Activated CD4-positive, alpha-beta T cell treated with anti-CD3 and anti-CD28 coated beads, Interleukin-2, amount 10 ng/mL, durations not matched to agents 24 days and 14 days (primary cell): ENCODE measurements at regions of chr4 and their contacts with region 1.

Region 1: GRCh38 chr4:6709230-6710114 is at the start of gene MRFAP1L1:
- DNase-seq: peak; percentile 99
- H3K4me3 Mint-ChIP-seq: peak within 1 kb of the TSS; percentile 95
- H3K27ac Mint-ChIP-seq: peak within 1 kb of the TSS; percentile 97
- H3K4me1 Mint-ChIP-seq: peaks cover 51% of the 10 kb centered on the region
- H3K27me3 Mint-ChIP-seq: no peaks in the 10 kb centered on the region
- total RNA-seq, gene MRFAP1L1: 51.4 TPM in 2 replicates

Region 2: GRCh38 chr4:6574747-6575502 is 134.5 kb before region 1 on chr4 and contains the start of gene MAN2B2:
- intact Hi-C with region 1: loop called (anchors 1 kb)
- DNase-seq: peak; percentile 96
- H3K4me3 Mint-ChIP-seq: peak within 1 kb of the TSS; percentile 89
- H3K27ac Mint-ChIP-seq: peak within 1 kb of the TSS; percentile 83
- H3K4me1 Mint-ChIP-seq: peaks cover 9% of the 10 kb centered on the region
- H3K27me3 Mint-ChIP-seq: peaks cover 8% of the 10 kb centered on the region
- total RNA-seq, gene MAN2B2: 12.7 and 14.9 TPM in 2 replicates

Region 3: DNA sequence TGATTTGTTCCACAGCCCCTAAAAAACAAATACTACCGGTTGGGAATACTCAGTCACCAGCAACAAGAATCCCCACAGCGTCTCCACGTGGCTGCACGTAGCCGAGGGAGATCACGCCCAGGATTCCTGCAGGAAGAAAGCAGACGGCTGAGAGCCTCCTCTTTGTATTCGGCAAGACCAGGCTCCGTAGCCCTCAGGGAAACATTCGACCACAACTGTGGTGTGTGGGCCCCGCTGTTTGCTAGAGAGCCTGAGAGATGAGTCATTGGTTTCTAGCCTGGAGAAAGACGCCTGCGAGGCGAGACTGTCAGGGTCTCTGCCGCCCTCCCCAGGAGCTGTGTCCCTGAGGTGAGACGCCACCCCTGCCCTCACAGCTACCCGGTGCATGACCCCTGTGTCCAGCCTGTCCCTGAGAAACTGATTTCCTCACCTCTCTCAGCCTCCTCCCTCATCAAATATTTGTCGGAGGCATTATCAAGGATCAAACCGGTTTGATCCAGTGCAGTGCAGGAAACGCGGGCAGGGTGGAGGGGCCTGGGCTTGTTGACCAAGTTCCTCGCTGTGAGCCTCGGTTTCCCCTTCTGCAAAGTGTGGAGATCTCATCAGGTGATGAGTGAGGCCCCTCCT is 20.5 kb before region 1 on chr4:
- intact Hi-C with region 1: loop called (anchors 2 kb)
- DNase-seq: peak; percentile 92
- H3K4me3 Mint-ChIP-seq: peak overlapping the region; percentile 87
- H3K27ac Mint-ChIP-seq: peak overlapping the region; percentile 92
- H3K4me1 Mint-ChIP-seq: peaks cover 65% of the 10 kb centered on the region
- H3K27me3 Mint-ChIP-seq: no peaks in the 10 kb centered on the region

Region 4: GRCh38 chr4:6695660-6696630 is 13.5 kb before region 1 on chr4:
- intact Hi-C with region 1: loop called (anchors 1 kb)
- DNase-seq: peak; percentile 89
- H3K4me3 Mint-ChIP-seq: peak overlapping the region; percentile 72
- H3K27ac Mint-ChIP-seq: peak overlapping the region; percentile 97
- H3K4me1 Mint-ChIP-seq: peaks cover 70% of the 10 kb centered on the region
- H3K27me3 Mint-ChIP-seq: no peaks in the 10 kb centered on the region

Region 5: DNA sequence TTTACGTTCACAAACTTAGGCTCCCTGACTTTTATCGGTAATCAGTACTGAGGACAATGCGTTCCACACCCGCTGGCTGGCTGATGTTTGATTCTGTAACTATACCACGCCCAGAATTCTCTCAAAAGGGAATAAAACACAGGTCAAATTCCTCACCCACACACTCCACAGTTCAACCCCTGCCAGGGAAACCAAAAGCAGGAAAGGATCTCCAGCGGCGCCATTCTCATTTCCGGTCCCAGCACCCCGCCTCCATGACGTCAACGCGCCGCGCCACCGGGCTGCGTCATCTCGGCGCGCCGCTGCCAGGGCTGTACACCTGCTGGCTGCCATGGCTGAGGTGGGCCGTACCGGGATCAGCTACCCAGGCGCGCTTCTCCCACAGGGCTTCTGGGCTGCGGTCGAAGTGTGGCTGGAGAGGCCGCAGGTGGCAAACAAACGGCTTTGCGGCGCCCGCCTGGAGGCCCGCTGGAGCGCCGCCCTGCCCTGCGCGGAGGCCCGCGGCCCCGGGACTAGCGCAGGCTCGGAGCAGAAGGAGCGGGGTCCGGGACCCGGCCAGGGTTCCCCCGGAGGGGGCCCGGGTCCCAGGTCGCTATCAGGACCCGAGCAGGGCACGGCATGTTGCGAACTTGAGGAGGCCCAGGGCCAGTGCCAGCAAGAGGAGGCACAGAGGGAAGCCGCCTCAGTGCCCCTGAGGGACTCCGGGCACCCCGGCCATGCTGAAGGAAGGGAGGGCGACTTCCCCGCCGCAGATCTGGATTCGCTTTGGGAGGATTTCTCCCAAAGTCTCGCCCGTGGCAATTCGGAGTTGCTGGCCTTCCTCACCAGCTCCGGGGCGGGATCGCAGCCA is 1731.2 kb after region 1 on chr4 and contains the starts of genes ACOX3 and TRMT44:
- intact Hi-C with region 1: loop called (anchors 10 kb)
- DNase-seq: peak; percentile 100
- H3K4me3 Mint-ChIP-seq: peak within 1 kb of the TSS; percentile 95
- H3K27ac Mint-ChIP-seq: peak within 1 kb of the TSS; percentile 99
- H3K4me1 Mint-ChIP-seq: peaks cover 62% of the 10 kb centered on the region
- H3K27me3 Mint-ChIP-seq: peaks cover 2% of the 10 kb centered on the region
- total RNA-seq, gene ACOX3: 20.5 and 23.0 TPM in 2 replicates
- total RNA-seq, gene TRMT44: 35.7 and 38.5 TPM in 2 replicates